Cardiac septum (tissue), 1 donor: ENCODE measurements at regions of chr15 and their contacts with region 1.

Region 1: GRCh38 chr15:90598031-90598577 is 68.4 kb downstream of the CRTC3 start:
- DNase-seq: peak; percentile 84

Region 2: DNA sequence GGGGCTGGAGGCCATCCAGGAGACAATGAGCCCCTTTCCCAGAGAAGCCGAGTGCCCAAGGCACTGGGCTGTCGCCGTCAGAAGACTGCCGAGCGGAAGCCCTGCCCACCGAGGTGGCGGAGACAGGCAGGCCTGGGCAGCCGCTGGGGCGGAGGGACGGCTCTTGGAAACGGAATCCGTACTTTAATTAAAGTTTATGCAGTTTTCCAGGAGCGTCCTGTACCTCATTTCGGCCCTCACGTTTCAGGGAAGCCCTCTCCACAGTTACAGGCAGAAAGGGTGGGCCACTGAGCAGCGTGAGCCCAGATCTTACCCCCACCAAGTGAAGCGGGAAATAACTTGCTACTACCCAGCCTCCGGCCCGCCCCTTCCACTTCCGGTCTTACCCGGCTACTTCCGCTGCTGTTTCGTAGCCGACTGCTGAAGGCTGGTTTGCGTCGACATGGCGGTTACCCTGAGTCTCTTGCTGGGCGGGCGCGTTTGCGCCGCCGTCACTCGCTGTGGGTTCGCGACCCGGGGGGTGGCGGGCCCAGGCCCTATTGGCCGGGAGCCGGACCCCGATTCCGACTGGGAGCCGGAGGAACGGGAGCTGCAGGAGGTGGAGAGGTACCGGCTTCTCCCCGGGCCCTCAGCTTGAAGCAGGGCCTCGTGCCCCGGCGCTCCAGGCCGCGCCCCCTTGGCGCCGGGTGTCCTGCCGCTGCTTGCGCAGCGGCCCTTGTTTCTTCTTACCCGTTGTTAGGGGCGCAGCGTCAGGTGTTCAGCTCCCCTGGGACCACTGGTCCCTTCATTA is 332.6 kb before region 1 on chr15 and contains the start of gene NGRN:
- intact Hi-C with region 1: no loop called
- DNase-seq: peak; percentile 99
- total RNA-seq, gene NGRN: 111 TPM

Region 3: GRCh38 chr15:90336705-90337141 is 261.4 kb before region 1 on chr15:
- intact Hi-C with region 1: no loop called
- DNase-seq: peak; percentile 82

Region 4: DNA sequence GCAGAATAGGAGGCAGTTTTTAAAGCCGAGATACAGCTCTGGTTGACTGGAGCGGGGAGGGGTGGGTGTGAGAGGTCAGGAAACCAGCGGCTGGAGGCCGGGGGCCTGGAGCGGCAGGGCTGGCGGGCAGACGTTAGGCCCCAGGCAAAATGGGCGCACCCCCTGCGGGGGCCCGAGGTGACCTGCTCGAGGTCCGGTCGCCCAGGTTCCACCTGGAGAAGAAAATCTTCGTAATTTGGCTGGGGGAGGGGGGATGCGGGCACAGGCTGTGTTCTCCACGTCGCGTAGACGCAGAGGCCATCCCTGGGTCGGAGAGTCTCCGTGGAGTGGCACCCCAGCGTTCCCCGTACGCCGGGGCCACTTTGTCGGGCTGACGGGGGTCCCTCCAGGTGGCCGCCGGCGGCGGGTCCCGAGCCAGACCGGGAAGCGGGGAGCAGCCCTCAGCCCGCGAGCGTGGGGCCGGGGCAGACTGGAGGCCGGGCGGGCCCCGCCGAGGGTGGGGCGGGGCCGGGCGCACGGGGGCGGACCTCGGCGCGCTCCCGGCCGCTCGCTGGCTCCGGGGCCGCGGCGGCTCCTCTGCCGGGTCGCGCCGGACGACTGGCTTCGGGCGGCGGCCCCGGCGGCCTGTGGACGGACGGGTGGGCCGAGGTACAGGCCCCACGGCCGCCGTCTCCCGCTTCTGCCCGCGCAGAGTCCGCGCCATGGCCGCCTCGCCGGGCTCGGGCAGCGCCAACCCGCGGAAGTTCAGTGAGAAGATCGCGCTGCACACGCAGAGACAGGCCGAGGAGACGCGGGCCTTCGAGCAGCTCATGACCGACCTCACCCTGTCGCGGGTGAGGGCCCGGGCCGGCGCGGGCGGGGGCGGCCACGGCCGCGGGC is 68.5 kb before region 1 on chr15 and contains the start of gene CRTC3:
- intact Hi-C with region 1: loop called (anchors 1 kb)
- DNase-seq: peak; percentile 82
- total RNA-seq, gene CRTC3: 30.4 TPM

Region 5: GRCh38 chr15:90539789-90540188 is 58.3 kb before region 1 on chr15:
- intact Hi-C with region 1: no loop called
- DNase-seq: no peak

Region 6: DNA sequence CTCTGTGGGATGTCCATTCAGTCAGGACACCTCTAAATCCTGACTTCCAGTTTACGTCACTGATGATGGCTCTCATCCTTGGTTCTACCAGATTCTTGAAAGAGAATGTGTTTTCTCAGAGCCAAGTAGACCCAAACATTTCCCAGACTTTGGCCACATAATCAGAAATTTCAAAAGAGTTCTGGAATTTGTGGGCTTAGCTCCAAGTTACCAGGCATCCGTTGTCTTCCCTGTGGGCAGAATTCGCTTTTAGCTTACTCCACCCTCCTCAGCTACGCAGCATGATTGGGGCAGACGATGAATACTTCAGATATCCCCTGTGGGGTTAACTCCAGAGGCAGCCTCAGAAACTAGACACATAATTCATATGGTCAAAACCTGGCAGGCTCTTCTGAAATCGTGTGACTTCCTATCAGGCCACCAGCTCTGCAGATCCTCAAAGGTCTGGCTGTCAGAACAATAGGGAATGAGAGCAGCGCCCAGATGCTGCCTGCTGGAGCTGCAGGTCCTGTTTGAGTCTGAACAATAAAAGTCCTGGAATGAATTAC is 37.8 kb before region 1 on chr15:
- intact Hi-C with region 1: loop called (anchors 5 kb)
- DNase-seq: peak; percentile 83

Region 7: DNA sequence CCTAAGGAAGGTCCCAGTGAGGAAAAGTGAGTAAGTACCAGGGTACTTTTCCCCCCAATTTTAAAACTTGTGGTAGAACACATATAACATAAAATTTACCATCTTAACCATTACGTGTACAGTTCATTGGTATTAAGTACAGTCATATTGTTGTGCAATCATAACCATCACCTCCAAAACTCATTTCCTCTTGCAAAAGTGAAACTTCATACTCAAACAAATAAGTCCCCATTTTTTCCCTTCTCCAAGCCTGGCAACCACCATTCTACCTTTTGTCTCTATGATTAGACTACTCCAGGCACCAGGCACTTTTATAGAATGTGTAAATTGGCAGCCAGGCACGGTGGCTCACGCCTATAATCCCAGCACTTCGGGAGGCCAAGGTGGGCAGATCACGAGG is 384.0 kb after region 1 on chr15:
- intact Hi-C with region 1: no loop called
- DNase-seq: no peak